Activated CD4-positive, alpha-beta T cell treated with anti-CD3 and anti-CD28 coated beads for 36 hours (primary cell): ENCODE measurements at regions of chr1 and their contacts with region 1.

Region 1: GRCh38 chr1:91885716-91886506 is at the start of gene TGFBR3:
- DNase-seq: peak; percentile 76
- ATAC-seq: peak; percentile 70
- H3K4me3 Mint-ChIP-seq: peak within 1 kb of the TSS; percentile 87
- H3K27ac Mint-ChIP-seq: peak within 1 kb of the TSS; percentile 80
- H3K4me1 Mint-ChIP-seq: peaks cover 38% of the 10 kb centered on the region
- H3K27me3 Mint-ChIP-seq: peaks cover 16% of the 10 kb centered on the region
- total RNA-seq, gene TGFBR3: 4.2 to 4.5 TPM

Region 2: GRCh38 chr1:91335603-91336002 is 550.3 kb before region 1 on chr1:
- CTCF ChIA-PET with region 1: no interaction called
- POLR2A ChIA-PET with region 1: no interaction called
- intact Hi-C with region 1: no loop called
- DNase-seq: no peak
- ATAC-seq: no peak
- H3K4me3 Mint-ChIP-seq: no peak overlapping the region
- H3K27ac Mint-ChIP-seq: no peak overlapping the region
- H3K4me1 Mint-ChIP-seq: no peaks in the 10 kb centered on the region
- H3K27me3 Mint-ChIP-seq: peaks cover 19% of the 10 kb centered on the region

Region 3: DNA sequence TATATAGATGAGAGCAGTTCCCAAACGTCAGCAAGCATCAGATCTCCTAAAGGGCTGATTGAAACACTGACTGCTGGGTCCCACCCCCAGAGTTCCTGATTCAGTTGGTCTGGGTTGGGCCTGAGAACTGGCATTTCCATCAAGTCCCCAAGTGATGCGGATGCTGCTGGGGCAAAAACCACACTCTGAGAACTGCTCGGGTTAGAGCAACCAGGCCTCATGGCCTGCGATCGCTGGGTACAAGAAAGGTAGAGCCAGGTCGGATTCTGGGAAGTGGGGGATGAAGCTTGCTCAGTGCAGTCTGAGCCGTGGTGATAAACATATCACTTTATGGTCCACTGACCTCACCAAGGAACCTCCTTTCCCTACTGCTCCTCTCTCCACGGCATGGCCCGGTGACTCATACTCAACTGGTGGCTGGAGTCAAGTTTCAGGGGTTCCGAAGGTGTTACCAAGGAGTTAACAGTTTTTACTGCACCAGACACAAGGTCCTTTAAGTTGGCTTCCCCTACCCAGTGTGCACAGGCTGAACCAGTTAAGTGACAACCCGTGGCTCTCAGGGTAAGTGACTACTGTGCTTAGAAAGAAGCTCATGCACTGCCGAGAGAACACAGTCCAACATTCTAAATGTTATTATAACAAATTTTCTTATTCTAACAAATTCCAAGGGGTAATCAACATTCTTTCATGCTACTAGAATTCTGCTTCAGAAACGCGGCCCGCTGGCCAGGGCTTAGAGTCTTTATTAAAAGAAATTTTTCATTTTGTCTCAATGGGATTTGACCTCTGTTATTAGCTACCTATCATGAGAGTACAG is 153.4 kb before region 1 on chr1:
- CTCF ChIA-PET with region 1: interaction called, 3 read pairs
- POLR2A ChIA-PET with region 1: no interaction called
- intact Hi-C with region 1: loop called in 1 of 2 experiments (anchors 1 kb)
- DNase-seq: peak; percentile 58
- ATAC-seq: peak; percentile 47
- H3K4me3 Mint-ChIP-seq: no peak overlapping the region
- H3K27ac Mint-ChIP-seq: peak overlapping the region; percentile 89
- H3K4me1 Mint-ChIP-seq: peaks cover 48% of the 10 kb centered on the region
- H3K27me3 Mint-ChIP-seq: peaks cover 5% of the 10 kb centered on the region